ENCODE measurements at regions of chr4 and their contacts with region 1.

Region 1: DNA sequence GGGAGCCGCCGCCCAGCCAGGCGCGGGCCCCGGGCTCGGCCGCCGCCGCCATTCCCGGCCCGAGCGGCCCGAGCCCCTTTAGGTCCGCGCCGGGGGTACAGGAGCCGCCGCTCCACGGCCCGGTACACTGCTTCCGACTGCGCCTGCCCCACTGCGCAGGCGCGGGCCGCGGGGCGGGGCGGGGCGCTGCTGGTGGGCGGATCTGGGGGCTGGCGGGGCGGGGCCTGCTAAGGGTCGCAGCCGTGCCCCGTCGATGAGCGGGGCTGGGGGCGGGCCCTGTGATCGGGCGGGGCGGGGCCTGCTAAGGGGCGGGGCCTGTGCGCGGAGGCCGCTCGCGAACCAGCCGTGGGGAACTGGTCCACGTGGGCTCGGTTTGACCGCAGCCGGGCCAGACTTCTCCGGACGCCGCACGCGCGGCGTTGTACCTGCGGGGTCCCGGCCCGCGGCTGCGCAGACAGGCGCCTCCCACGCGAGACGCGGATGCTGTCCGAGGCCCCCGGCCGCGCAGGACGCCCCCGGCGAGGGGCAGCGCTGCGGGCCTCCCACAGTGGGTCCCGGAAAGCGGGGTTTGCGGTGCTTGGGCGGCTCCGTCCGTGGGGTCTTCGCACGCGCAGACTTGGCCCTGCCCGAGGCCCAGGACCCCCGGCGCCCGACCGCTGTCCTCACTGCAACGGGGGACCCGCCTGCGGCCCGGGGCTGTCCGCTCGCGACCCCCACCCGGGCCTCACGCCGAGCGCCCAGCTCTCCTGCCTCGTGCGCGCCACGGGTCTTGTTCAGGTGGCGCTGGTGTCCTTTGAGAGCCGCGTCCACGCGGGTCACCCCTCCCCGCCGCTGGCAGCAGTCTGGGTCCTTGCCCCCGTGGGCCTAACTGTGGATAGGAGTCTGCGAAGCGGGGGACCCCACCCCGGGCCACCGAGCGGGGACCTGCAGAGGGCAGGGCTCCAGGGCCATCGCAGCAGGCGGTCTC is at the start of gene DGKQ:
- DNase-seq: peak; percentile 88 to 92
- ATAC-seq: peak; percentile 78 to 93 (median 82)
- H3K4me3 ChIP-seq: peak within 1 kb of the TSS; percentile 56
- H3K4me3 Mint-ChIP-seq: peak within 1 kb of the TSS; percentile 74
- H3K27ac ChIP-seq: peak within 1 kb of the TSS; percentile 16
- H3K27ac Mint-ChIP-seq: peak within 1 kb of the TSS in 1 of 2 donors; percentile 78
- H3K4me1 ChIP-seq: peaks cover 44% of the 10 kb centered on the region
- H3K4me1 Mint-ChIP-seq: peaks cover 19 to 26% of the 10 kb centered on the region in 2 donors
- H3K27me3 ChIP-seq: no peaks in the 10 kb centered on the region
- H3K27me3 Mint-ChIP-seq: no peaks in the 10 kb centered on the region
- CTCF ChIP-seq: no peak
- total RNA-seq, gene DGKQ: 64.2 to 79.5 (median 65.2) TPM

Region 2: DNA sequence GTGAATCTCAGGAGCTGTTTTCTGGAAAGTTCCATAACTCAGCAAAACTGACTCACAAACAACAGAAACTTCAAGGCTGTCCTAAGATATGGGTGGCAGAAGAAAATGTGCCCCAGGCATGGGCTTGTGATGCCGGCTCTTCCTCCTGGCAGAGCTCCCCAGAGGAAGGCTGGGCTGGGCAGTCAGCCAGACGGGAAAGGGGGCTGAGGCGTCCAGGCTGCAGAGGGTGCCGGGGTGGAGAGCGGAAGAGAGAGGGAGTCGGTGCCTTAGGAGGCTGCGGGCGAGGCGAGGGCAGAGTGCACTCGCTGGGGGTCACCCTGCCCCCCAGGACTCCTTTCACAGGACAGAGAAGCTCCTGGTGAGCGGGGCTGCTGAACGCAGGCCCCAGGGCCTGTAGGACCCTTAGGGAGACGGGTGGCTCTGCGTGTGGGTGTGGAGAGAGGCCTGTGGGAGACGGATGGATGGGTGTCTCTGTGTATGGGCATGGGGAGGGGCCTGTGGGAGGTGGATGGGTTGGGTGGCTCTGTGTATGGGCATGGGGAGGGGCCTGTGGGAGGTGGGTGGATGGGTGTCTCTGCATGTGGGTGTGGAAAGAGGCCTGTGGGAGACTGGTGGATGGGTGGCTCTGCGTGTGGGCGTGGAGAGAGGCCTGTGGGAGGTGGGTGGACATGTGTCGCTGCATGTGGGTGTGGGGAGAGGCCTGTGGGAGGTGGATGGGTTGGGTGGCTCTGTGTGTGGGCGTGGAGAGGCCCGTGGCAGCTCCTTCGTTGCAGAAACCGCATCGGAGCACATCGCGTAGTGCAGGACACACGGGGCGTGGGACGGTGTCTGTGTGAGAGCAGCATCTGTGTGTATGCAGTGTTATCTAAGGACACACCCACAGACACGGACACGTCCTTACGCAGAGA is 252.2 kb before region 1 on chr4:
- intact Hi-C with region 1: no loop called
- DNase-seq: no peak
- ATAC-seq: peak in 2 of 3 donors; percentile 38 to 48
- H3K4me3 ChIP-seq: no peak overlapping the region
- H3K4me3 Mint-ChIP-seq: peak overlapping the region; percentile 21
- H3K27ac ChIP-seq: no peak overlapping the region
- H3K27ac Mint-ChIP-seq: peak overlapping the region in 1 of 2 donors; percentile 72
- H3K4me1 ChIP-seq: peaks cover 7% of the 10 kb centered on the region
- H3K4me1 Mint-ChIP-seq: peaks cover 32 to 68% of the 10 kb centered on the region in 2 donors
- H3K27me3 ChIP-seq: no peaks in the 10 kb centered on the region
- H3K27me3 Mint-ChIP-seq: no peaks in the 10 kb centered on the region
- CTCF ChIP-seq: no peak

Region 3: GRCh38 chr4:880684-881405 is 92.9 kb before region 1 on chr4:
- intact Hi-C with region 1: no loop called
- DNase-seq: no peak
- ATAC-seq: no peak
- H3K4me3 ChIP-seq: no peak overlapping the region
- H3K4me3 Mint-ChIP-seq: no peak overlapping the region
- H3K27ac ChIP-seq: no peak overlapping the region
- H3K27ac Mint-ChIP-seq: peak overlapping the region; percentile 58 to 93
- H3K4me1 ChIP-seq: peaks cover 10% of the 10 kb centered on the region
- H3K4me1 Mint-ChIP-seq: peaks cover 16 to 18% of the 10 kb centered on the region in 2 donors
- H3K27me3 ChIP-seq: no peaks in the 10 kb centered on the region
- H3K27me3 Mint-ChIP-seq: no peaks in the 10 kb centered on the region
- CTCF ChIP-seq: no peak

Region 4: GRCh38 chr4:931960-932712 is 41.6 kb before region 1 on chr4 and contains the starts of genes GAK and TMEM175:
- intact Hi-C with region 1: loop called (anchors 1 kb)
- DNase-seq: peak; percentile 98 to 99
- ATAC-seq: peak; percentile 84 to 95 (median 89)
- H3K4me3 ChIP-seq: peak within 1 kb of the TSS; percentile 81
- H3K4me3 Mint-ChIP-seq: peak within 1 kb of the TSS; percentile 94
- H3K27ac ChIP-seq: peak within 1 kb of the TSS; percentile 83
- H3K27ac Mint-ChIP-seq: peak within 1 kb of the TSS; percentile 89 to 95
- H3K4me1 ChIP-seq: peaks cover 45% of the 10 kb centered on the region
- H3K4me1 Mint-ChIP-seq: peaks cover 30 to 42% of the 10 kb centered on the region in 2 donors
- H3K27me3 ChIP-seq: no peaks in the 10 kb centered on the region
- H3K27me3 Mint-ChIP-seq: no peaks in the 10 kb centered on the region
- CTCF ChIP-seq: no peak
- total RNA-seq, gene GAK: 349 to 358 (median 349) TPM
- total RNA-seq, gene TMEM175: 72.8 to 79.8 (median 73.2) TPM

Region 5: GRCh38 chr4:948051-948935 is 25.4 kb before region 1 on chr4:
- intact Hi-C with region 1: no loop called
- DNase-seq: no peak
- ATAC-seq: no peak
- H3K4me3 ChIP-seq: no peak overlapping the region
- H3K4me3 Mint-ChIP-seq: no peak overlapping the region
- H3K27ac ChIP-seq: no peak overlapping the region
- H3K27ac Mint-ChIP-seq: no peak overlapping the region
- H3K4me1 ChIP-seq: peaks cover 11% of the 10 kb centered on the region
- H3K4me1 Mint-ChIP-seq: peaks cover 19 to 34% of the 10 kb centered on the region in 2 donors
- H3K27me3 ChIP-seq: no peaks in the 10 kb centered on the region
- H3K27me3 Mint-ChIP-seq: no peaks in the 10 kb centered on the region
- CTCF ChIP-seq: no peak

Region 6: GRCh38 chr4:986879-987623 is 13.3 kb after region 1 on chr4 and contains the start of gene IDUA:
- intact Hi-C with region 1: loop called (anchors 1 kb)
- DNase-seq: peak; percentile 77 to 92
- ATAC-seq: peak; percentile 86 to 91 (median 86)
- H3K4me3 ChIP-seq: peak within 1 kb of the TSS; percentile 73
- H3K4me3 Mint-ChIP-seq: peak within 1 kb of the TSS; percentile 93
- H3K27ac ChIP-seq: peak within 1 kb of the TSS; percentile 70
- H3K27ac Mint-ChIP-seq: peak within 1 kb of the TSS; percentile 80 to 81
- H3K4me1 ChIP-seq: peaks cover 30% of the 10 kb centered on the region
- H3K4me1 Mint-ChIP-seq: peaks cover 23 to 29% of the 10 kb centered on the region in 2 donors
- H3K27me3 ChIP-seq: no peaks in the 10 kb centered on the region
- H3K27me3 Mint-ChIP-seq: no peaks in the 10 kb centered on the region
- CTCF ChIP-seq: peak; percentile 68
- total RNA-seq, gene IDUA: 38.7 to 43.6 (median 43.0) TPM

Region 7: DNA sequence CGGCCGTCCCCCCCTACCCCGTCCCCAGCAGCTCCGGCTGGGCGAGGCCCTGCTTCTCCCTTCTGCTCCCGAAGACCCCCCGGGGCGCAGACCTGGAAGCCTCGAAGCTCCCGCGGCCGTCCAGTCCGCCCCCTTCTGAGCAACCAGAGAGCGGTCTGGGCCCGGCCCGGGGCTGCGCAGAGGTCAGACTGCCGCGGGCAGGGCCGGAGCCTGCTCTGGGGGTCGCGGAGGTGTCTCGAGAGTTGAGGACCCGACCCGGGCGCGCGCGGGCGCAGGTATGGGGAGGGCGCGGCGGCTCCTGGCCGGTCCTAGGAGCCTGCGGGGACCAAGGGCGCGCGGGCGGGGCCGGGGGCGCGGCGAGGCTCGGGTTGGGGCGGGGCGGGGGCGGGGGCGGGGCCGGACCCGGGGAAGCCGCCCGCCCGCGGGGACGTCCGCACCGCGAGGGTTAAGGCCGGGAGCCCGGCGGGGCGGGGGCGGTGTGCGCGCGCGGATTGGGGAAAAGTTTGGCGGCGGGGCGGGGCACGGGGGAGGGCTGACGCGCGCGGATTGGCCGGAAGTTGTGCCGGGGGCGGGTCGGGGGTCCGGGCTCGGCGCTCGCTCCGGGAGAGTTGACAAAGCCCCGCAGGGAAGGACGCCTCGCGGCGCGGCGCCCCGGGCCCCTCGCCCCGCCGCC is 37.4 kb after region 1 on chr4 and contains the start of gene FGFRL1:
- intact Hi-C with region 1: loop called (anchors 5 kb)
- DNase-seq: peak; percentile 76 to 94
- ATAC-seq: peak; percentile 45 to 65 (median 60)
- H3K4me3 ChIP-seq: peak within 1 kb of the TSS; percentile 70
- H3K4me3 Mint-ChIP-seq: peak within 1 kb of the TSS; percentile 92
- H3K27ac ChIP-seq: peak within 1 kb of the TSS; percentile 78
- H3K27ac Mint-ChIP-seq: peak within 1 kb of the TSS; percentile 84 to 96
- H3K4me1 ChIP-seq: peaks cover 30% of the 10 kb centered on the region
- H3K4me1 Mint-ChIP-seq: peaks cover 7 to 15% of the 10 kb centered on the region in 2 donors
- H3K27me3 ChIP-seq: no peaks in the 10 kb centered on the region
- H3K27me3 Mint-ChIP-seq: peaks cover 16 to 24% of the 10 kb centered on the region in 2 donors
- CTCF ChIP-seq: no peak
- total RNA-seq, gene FGFRL1: 28.0 to 39.8 (median 32.5) TPM